Left cardiac atrium (tissue), 4 donors: ENCODE measurements at regions of chr3 and their contacts with region 1.

Region 1: GRCh38 chr3:171187706-171188290 is 161.3 kb upstream of the SLC2A2 start:
- DNase-seq: no peak
- ATAC-seq: peak; percentile 60 to 71

Region 2: GRCh38 chr3:171225708-171226107 is 37.9 kb after region 1 on chr3:
- intact Hi-C with region 1: no loop called
- DNase-seq: no peak
- ATAC-seq: no peak

Region 3: DNA sequence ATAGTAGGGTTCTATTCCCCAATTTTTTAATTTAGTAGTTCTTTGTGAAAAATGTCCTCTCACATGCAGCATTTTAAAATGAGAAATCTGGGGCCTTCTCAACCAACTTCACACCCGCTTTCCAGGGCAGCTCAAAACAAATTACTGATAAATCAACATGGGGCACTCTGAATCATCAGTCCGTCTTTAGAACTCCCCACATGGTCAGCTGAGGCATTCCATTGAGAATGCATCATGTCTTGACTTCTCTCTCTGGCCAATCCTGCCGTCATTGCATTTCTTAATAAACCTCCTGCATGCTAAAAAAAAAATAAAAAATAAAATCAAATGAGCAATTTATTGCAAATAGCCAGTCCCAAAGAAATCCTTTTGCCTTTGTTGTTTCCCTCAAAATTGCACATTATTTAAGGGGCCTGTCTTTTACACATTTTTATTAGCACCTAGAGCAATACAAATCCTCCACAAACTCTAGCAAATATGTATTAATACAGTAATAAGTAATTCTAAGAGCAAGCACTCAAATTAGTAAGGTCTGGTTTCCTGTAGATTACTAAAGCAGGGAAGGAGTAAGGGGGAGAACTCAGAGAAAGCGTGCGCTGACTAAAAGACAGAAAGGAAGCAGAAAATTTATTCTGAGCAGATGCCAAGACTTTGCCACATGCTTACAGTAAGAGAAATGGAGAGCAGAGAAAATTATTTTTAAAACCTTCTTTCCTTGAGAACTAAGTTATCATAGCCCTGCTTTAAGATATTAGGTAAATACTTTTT is 96.7 kb after region 1 on chr3:
- intact Hi-C with region 1: loop called in 1 of 2 experiments (anchors 10 kb)
- DNase-seq: peak; percentile 36
- ATAC-seq: peak; percentile 60 to 94

Region 4: DNA sequence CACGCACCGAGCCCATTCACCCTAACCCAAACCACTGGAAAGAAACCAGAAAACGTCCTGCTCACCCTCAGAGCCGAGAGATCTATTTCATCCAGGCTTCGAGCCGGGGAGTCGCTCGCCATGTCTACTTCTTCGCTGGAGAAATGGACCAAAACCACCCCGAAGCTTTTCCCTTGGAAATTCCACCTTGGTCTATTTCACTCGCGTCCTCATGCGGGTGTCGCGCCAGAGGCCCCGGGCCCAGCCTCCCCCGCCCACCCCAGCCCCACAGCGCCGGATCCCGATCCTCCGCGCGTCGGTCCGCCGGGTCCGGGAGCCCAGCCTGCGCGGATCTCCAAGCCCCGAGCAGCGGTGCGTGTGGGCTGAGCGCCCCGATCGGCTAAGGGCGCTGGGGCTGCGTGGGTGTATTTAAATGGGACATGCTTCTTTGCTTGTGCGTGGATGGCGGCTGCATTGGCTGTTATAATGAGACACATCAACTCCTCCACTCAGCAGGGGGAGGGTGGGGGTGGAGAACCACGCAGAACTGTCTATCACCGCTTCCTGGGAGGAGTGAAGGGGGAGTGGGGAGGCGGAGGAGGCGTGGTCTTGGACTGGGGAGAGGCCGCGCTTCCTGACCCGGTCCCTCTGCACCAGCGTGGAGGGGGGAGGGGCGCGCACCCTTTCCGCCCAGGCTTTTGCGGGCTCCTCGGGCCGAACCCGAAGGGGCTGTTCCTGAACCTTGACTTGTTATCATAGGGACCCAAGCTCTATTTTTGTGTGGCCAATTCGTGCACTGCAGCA is 272.3 kb after region 1 on chr3 and contains the start of gene TNIK:
- intact Hi-C with region 1: loop called in 1 of 2 experiments (anchors 5 kb)
- DNase-seq: peak; percentile 91
- ATAC-seq: peak; percentile 97 to 98
- total RNA-seq, gene TNIK: 13.6 to 16.0 TPM

Region 5: GRCh38 chr3:171556148-171557145 is 368.6 kb after region 1 on chr3:
- intact Hi-C with region 1: loop called in 1 of 2 experiments (anchors 5 kb)
- DNase-seq: peak; percentile 27
- ATAC-seq: peak; percentile 93 to 95